Sigmoid colon (tissue), 7 donors: ENCODE measurements at regions of chr6 and their contacts with region 1.

Region 1: GRCh38 chr6:39980839-39981580 is 46.7 kb upstream of the MOCS1 start:
- DNase-seq: no peak
- H3K4me3 ChIP-seq: no peak overlapping the region
- H3K27ac ChIP-seq: peak overlapping the region in 1 of 4 donors; percentile 38
- H3K4me1 ChIP-seq: peaks cover 0 to 9% (median 6%) of the 10 kb centered on the region in 4 donors
- H3K27me3 ChIP-seq: no peaks in the 10 kb centered on the region
- CTCF ChIP-seq: peak; percentile 44 to 62 (median 48)
- EP300 ChIP-seq: no peak
- POLR2A ChIP-seq: no peak

Region 2: GRCh38 chr6:40308533-40309306 is 327.7 kb after region 1 on chr6:
- intact Hi-C with region 1: loop called (anchors 2 kb)
- DNase-seq: no peak
- H3K4me3 ChIP-seq: no peak overlapping the region
- H3K27ac ChIP-seq: no peak overlapping the region
- H3K4me1 ChIP-seq: no peaks in the 10 kb centered on the region
- H3K27me3 ChIP-seq: peaks cover 0 to 16% (median 0%) of the 10 kb centered on the region in 3 donors
- CTCF ChIP-seq: peak; percentile 28 to 84 (median 70)
- EP300 ChIP-seq: no peak
- POLR2A ChIP-seq: no peak

Region 3: GRCh38 chr6:40587240-40588069 is 606.4 kb after region 1 on chr6 and contains the start of gene LRFN2:
- intact Hi-C with region 1: loop called (anchors 10 kb)
- DNase-seq: peak; percentile 68
- H3K4me3 ChIP-seq: peak within 1 kb of the TSS; percentile 15 to 55 (median 46)
- H3K27ac ChIP-seq: peak within 1 kb of the TSS in 3 of 4 donors; percentile 26 to 58 (median 47)
- H3K4me1 ChIP-seq: peaks cover 0 to 23% (median 19%) of the 10 kb centered on the region in 4 donors
- H3K27me3 ChIP-seq: peaks cover 3 to 80% (median 52%) of the 10 kb centered on the region in 3 donors
- CTCF ChIP-seq: peak in 3 of 4 experiments; percentile 18 to 73 (median 70)
- EP300 ChIP-seq: no peak
- POLR2A ChIP-seq: no peak
- total RNA-seq, gene LRFN2: 0.49 TPM in 1 of 4 donors, not detected in the others

Region 4: DNA sequence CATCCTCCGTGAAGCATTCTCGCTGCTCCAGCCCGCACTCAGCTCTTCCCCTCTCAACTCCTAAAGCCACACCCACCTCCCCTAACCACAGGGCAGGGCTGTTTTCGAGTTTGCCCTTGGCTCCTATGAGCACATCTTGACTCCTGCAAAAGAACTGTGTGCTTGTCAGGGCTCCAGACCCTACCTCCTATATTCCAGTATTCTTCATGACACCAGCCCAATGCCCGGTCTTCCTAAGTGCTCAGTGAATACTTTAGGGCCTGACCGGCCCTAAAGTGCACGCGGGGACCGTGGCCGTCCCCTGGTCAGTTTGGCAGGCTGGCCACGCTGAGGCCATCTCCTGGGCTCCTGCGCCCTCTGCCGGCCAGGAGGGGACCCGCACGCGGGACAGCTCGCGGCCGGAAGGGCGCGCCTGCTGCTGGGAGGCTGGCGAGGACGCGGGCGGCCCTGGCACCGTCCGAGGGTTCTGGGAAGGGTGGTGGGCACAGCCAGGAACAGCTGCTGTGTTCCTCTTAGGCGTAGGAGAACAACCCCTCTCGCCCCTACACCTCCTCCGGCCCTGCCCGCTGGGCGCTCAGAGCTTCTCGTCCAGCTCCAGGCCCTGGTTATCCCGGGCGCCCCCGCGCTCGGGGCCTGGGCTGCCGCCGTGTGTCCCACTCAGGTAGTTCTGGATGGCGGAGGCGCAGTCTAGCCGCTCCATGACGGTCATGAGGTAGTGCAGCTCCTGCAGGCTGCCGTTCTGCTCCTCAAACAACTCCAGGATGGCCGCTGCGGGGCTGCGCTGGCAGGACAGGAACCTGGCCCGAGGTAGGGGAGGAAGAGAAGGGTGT is 1047.0 kb after region 1 on chr6:
- intact Hi-C with region 1: loop called (anchors 2 kb)
- DNase-seq: peak; percentile 89
- H3K4me3 ChIP-seq: peak overlapping the region; percentile 23 to 54 (median 46)
- H3K27ac ChIP-seq: peak overlapping the region; percentile 26 to 56 (median 38)
- H3K4me1 ChIP-seq: peaks cover 0 to 17% (median 10%) of the 10 kb centered on the region in 4 donors
- H3K27me3 ChIP-seq: no peaks in the 10 kb centered on the region
- CTCF ChIP-seq: peak; percentile 95 to 99 (median 98)
- EP300 ChIP-seq: no peak
- POLR2A ChIP-seq: no peak

Region 5: GRCh38 chr6:41066867-41067304 is 1085.9 kb after region 1 on chr6:
- intact Hi-C with region 1: loop called (anchors 10 kb)
- DNase-seq: peak; percentile 83
- H3K4me3 ChIP-seq: no peak overlapping the region
- H3K27ac ChIP-seq: no peak overlapping the region
- H3K4me1 ChIP-seq: peaks cover 0 to 15% (median 10%) of the 10 kb centered on the region in 4 donors
- H3K27me3 ChIP-seq: no peaks in the 10 kb centered on the region
- CTCF ChIP-seq: peak; percentile 65 to 81 (median 72)
- EP300 ChIP-seq: no peak
- POLR2A ChIP-seq: no peak

Region 6: DNA sequence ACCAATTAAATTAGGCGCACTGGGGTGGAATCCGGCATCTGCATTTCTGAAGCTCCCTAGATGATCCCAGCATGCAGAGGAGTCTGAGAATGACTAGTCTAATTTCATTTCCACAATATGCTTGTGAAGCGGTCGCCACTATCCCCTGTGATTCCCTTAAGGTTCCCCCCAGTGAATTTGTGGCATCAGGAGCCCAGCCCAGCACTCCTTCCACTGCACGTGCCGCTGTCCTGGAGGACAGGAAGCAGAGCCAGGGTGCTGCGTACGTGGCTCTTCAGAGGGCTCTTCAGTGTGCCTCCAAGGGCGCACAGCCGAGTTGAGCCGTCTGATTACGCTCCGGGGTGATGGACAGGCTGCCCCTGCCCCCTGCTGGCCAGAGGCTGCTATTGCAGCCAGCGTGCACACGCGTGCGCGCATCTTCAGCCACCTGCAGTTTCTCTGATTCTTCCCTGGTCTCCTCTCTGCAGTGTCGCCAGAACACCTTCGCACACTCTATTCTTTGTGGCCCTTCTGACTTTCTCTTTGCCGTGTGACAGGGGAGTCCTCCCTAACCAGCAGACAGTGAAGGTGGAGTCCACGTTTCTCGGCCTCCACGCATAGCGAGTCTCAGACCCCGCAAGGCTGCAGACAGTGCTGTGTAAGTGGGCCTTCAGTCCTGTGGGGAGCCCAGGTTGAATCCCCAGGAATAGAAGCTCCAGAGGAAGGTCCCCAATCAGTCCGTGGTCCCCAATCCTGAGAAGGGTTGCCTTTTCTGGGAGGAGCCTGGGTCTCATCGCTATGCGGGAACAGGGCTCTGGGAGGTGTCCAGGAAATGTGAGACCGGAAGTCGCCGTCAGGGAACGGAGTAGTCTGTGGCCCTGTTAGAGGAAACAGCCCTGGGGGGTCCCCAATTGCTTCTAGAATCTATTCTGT is 1337.9 kb after region 1 on chr6:
- intact Hi-C with region 1: loop called (anchors 10 kb)
- DNase-seq: peak; percentile 86
- H3K4me3 ChIP-seq: peak overlapping the region in 3 of 4 donors; percentile 23 to 34 (median 32)
- H3K27ac ChIP-seq: no peak overlapping the region
- H3K4me1 ChIP-seq: peaks cover 0 to 10% (median 7%) of the 10 kb centered on the region in 4 donors
- H3K27me3 ChIP-seq: peaks cover 0 to 9% (median 0%) of the 10 kb centered on the region in 3 donors
- CTCF ChIP-seq: peak; percentile 83 to 100 (median 98)
- EP300 ChIP-seq: no peak
- POLR2A ChIP-seq: no peak